ENCODE measurements at regions of chr4 and their contacts with region 1.

Region 1: GRCh38 chr4:100093091-100093866 is 97.0 kb downstream of the DDIT4L start:
- DNase-seq: peak; percentile 90
- H3K4me3 Mint-ChIP-seq: no peak overlapping the region
- H3K27ac Mint-ChIP-seq: peak overlapping the region; percentile 41
- H3K4me1 Mint-ChIP-seq: peaks cover 47% of the 10 kb centered on the region
- H3K27me3 Mint-ChIP-seq: peaks cover 2% of the 10 kb centered on the region

Region 2: DNA sequence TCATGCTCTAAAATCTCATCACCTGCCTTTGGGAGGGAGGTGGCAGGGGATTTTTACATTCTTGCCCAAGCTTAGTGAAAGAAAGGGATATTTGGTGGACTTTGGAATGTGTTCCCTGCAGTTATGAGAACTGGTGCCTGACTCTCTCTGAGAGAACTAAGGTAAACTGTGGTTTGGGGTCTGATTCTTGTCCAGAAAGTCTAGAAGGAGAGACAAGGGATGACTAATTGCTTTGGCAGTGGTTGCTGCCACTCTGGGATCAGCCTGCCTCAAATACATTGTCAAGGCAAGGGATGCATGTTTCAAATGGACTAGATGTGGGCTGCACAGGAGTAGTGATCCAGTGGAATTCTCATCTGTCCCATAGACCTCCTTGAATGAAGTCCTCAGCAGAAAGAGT is 18.2 kb before region 1 on chr4:
- CTCF ChIA-PET with region 1: interaction called, 10 read pairs
- POLR2A ChIA-PET with region 1: no interaction called
- DNase-seq: no peak
- H3K4me3 Mint-ChIP-seq: no peak overlapping the region
- H3K27ac Mint-ChIP-seq: no peak overlapping the region
- H3K4me1 Mint-ChIP-seq: peaks cover 5% of the 10 kb centered on the region
- H3K27me3 Mint-ChIP-seq: peaks cover 9% of the 10 kb centered on the region

Region 3: GRCh38 chr4:100082852-100083251 is 10.4 kb before region 1 on chr4:
- CTCF ChIA-PET with region 1: interaction called, 20 read pairs
- POLR2A ChIA-PET with region 1: no interaction called
- DNase-seq: no peak
- H3K4me3 Mint-ChIP-seq: no peak overlapping the region
- H3K27ac Mint-ChIP-seq: no peak overlapping the region
- H3K4me1 Mint-ChIP-seq: peaks cover 13% of the 10 kb centered on the region
- H3K27me3 Mint-ChIP-seq: no peaks in the 10 kb centered on the region

Region 4: GRCh38 chr4:100106982-100107381 is 13.7 kb after region 1 on chr4:
- CTCF ChIA-PET with region 1: interaction called, 39 read pairs
- POLR2A ChIA-PET with region 1: interaction called, 7 read pairs
- DNase-seq: peak; percentile 63
- H3K4me3 Mint-ChIP-seq: no peak overlapping the region
- H3K27ac Mint-ChIP-seq: peak overlapping the region; percentile 74
- H3K4me1 Mint-ChIP-seq: peaks cover 31% of the 10 kb centered on the region
- H3K27me3 Mint-ChIP-seq: no peaks in the 10 kb centered on the region

Region 5: DNA sequence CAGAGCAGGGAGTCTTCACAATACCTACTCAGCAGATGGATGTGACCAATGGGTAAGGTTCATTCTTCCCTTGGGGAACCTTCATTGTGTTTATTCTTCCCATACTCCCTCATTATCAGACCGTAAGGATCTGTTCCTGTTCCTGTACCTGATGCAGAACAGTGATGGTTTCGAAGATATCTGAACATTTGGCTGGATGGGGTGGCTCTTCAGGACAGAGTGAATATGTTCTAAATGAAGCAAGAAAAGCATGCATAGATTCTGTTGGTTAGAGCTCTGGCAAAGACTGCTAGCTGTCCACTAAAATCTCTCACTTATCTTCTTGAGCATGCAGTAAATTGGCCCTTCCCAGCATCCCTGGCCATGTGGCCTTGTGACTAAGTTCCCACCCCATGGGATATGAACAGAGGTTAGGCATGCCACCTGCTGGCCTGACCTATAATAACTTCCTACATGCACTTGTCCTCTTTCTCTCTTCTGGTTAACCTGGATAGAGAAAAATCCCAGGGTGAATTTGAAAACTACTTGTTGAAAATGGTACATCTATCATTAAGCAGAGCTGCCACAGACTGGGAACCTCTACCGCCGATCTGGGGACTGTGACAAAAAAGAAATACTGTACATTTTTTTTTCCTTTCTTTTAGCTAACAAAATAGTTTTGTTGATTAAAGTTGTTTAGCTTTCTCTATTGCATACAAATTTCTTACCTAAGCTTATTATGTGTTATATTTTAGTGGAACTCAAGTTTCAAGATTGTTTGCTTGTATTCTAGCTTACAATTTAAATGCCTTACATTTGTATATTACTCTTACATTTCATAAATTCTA is 1637.2 kb after region 1 on chr4:
- CTCF ChIA-PET with region 1: interaction called, 22 read pairs
- POLR2A ChIA-PET with region 1: no interaction called
- DNase-seq: peak; percentile 56
- H3K4me3 Mint-ChIP-seq: no peak overlapping the region
- H3K27ac Mint-ChIP-seq: no peak overlapping the region
- H3K4me1 Mint-ChIP-seq: no peaks in the 10 kb centered on the region
- H3K27me3 Mint-ChIP-seq: peaks cover 10% of the 10 kb centered on the region

Measured in activated CD4-positive, alpha-beta memory T cell treated with anti-CD3 and anti-CD28 coated beads, Interleukin-2, amount 10 ng/mL, durations not matched to agents 7 days and 5 days (primary cell).